Heart right ventricle (tissue), 16 donors: ENCODE measurements at regions of chr1 and their contacts with region 1.

Region 1: DNA sequence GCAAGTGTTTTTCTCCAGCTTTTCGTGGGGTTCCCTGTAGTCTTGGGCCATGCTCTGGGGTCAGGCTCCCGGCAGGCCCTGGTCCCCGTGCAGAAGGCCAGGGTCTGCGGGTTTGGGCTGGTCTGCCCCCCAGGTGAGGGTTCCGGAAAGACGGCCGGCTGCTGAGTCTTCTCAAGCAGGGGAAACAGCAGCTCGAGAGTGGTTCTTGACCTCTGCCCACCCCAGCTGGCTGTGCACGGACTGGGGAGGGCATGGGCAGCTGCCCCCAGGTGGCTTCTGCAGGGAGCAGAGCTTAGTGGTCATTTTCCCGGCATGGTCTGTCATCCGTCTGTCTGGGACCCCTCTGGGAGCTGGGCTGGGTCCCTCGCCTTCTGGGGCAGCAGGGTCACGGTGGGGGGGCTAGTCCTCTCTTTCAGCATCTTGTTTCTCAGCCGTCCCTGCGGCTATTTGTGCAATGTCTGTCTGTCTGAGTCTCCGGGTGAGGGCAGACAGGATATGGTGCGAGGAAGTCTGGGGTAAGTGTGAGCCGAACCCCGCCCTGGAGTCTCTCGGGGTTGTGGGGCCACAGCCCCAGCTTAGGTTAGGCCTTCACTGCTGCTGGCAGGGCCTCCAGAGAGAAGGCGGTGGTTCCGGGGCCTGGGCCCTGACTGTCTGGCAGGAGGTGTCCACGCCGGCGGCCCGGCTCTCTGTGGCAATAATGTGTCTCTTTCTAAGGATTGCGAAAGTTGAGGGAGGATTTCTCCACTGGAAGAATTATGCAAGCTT is 6.1 kb downstream of the SKI start:
- DNase-seq: peak in 1 of 2 donors; percentile 87
- ATAC-seq: peak; percentile 15 to 80 (median 52)
- H3K4me3 ChIP-seq: peak overlapping the region in 9 of 10 donors; percentile 10 to 89 (median 72)
- H3K27ac ChIP-seq: peak overlapping the region; percentile 31 to 90 (median 78)
- H3K4me1 ChIP-seq: peaks cover 53 to 100% (median 100%) of the 10 kb centered on the region in 9 donors
- H3K27me3 ChIP-seq: no peaks in the 10 kb centered on the region
- CTCF ChIP-seq: no peak

Region 2: DNA sequence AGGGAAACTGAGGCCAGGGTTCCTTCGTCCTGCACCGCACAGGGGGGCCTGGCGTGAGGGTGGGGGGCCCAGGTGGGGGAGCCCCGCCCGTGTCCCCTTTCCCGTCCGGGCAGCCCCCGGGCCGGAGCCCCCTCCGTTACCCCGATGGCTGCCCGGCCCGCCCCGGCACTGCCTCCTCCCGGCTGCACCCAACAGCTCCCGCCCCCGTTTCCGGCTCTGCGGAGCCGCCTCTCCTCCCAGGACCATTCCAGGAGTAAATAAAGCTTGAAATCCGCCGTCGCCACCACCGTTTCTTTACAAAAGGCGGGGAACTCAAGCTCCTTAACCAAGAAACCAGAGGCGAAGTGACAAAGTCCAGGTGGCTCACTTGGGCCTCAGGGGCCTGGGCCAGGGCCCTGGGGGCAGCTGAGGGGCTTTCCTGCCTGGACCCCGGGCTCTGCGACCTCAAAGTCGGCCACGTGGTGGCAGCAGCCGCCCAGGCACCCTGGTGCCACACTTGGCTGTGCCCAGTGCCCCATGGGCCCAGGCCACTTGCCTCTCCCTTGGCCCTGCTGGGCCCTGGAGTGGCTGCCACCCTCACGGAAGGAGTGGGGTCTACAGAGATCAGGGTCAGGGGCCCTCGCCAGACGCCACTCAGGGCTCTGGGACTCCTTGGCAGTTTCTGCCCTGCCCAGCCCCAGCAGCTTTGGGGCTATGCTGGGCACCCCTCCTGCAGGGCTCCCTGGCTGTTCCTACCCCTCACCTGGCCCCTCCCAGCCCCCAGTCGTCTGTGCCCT is 39.1 kb before region 1 on chr1:
- intact Hi-C with region 1: loop called in 4 of 10 experiments (anchors 5 kb)
- DNase-seq: peak; percentile 92
- ATAC-seq: peak; percentile 77 to 86 (median 82)
- H3K4me3 ChIP-seq: peak overlapping the region; percentile 47 to 78 (median 70)
- H3K27ac ChIP-seq: peak overlapping the region; percentile 90 to 98 (median 94)
- H3K4me1 ChIP-seq: peaks cover 36 to 71% (median 65%) of the 10 kb centered on the region in 9 donors
- H3K27me3 ChIP-seq: no peaks in the 10 kb centered on the region
- CTCF ChIP-seq: peak; percentile 91 to 98 (median 95)

Region 3: GRCh38 chr1:2267051-2267830 is 33.1 kb after region 1 on chr1:
- intact Hi-C with region 1: loop called in 1 of 10 experiments (anchors 5 kb)
- DNase-seq: peak in 1 of 2 donors; percentile 23
- ATAC-seq: peak in 7 of 8 donors; percentile 16 to 53 (median 21)
- H3K4me3 ChIP-seq: peak overlapping the region in 2 of 10 donors; percentile 0 to 13
- H3K27ac ChIP-seq: peak overlapping the region in 2 of 10 donors; percentile 6 to 10
- H3K4me1 ChIP-seq: peaks cover 47 to 90% (median 74%) of the 10 kb centered on the region in 9 donors
- H3K27me3 ChIP-seq: no peaks in the 10 kb centered on the region
- CTCF ChIP-seq: no peak

Region 4: DNA sequence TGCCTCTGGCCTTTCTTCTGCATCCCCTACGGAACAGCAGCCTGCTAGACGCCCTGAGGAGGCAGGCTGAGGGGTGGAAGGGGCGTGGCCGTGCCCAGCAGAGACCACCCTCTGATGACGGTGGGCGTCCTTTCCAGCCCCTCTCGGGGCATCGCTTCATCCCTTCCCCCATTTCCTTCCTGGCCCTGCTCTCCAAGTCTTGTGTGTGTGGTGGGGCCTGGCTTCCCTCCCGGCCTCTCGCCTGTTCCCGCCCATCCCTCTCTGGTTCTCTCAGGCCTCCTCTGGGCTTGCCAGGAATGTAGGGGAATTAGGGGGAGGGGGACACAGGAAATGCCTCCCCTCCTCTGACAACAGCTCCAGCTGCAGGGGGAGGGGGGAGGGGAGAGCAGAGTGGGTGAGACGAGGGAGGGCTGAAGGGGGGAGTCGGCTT is 45.0 kb after region 1 on chr1:
- intact Hi-C with region 1: loop called in 2 of 10 experiments (anchors 5 kb)
- DNase-seq: peak; percentile 66 to 86
- ATAC-seq: peak; percentile 50 to 83 (median 77)
- H3K4me3 ChIP-seq: peak overlapping the region in 1 of 10 donors; percentile 2
- H3K27ac ChIP-seq: peak overlapping the region in 9 of 10 donors; percentile 10 to 86 (median 78)
- H3K4me1 ChIP-seq: peaks cover 45 to 78% (median 70%) of the 10 kb centered on the region in 9 donors
- H3K27me3 ChIP-seq: no peaks in the 10 kb centered on the region
- CTCF ChIP-seq: no peak

Region 5: GRCh38 chr1:2290595-2291510 is 56.7 kb after region 1 on chr1:
- intact Hi-C with region 1: loop called in 3 of 10 experiments (anchors 5 to 10 kb)
- DNase-seq: peak; percentile 78 to 82
- ATAC-seq: peak; percentile 45 to 85 (median 76)
- H3K4me3 ChIP-seq: peak overlapping the region in 9 of 10 donors; percentile 14 to 44 (median 28)
- H3K27ac ChIP-seq: peak overlapping the region; percentile 56 to 93 (median 77)
- H3K4me1 ChIP-seq: peaks cover 44 to 98% (median 84%) of the 10 kb centered on the region in 9 donors
- H3K27me3 ChIP-seq: no peaks in the 10 kb centered on the region
- CTCF ChIP-seq: no peak

Region 6: DNA sequence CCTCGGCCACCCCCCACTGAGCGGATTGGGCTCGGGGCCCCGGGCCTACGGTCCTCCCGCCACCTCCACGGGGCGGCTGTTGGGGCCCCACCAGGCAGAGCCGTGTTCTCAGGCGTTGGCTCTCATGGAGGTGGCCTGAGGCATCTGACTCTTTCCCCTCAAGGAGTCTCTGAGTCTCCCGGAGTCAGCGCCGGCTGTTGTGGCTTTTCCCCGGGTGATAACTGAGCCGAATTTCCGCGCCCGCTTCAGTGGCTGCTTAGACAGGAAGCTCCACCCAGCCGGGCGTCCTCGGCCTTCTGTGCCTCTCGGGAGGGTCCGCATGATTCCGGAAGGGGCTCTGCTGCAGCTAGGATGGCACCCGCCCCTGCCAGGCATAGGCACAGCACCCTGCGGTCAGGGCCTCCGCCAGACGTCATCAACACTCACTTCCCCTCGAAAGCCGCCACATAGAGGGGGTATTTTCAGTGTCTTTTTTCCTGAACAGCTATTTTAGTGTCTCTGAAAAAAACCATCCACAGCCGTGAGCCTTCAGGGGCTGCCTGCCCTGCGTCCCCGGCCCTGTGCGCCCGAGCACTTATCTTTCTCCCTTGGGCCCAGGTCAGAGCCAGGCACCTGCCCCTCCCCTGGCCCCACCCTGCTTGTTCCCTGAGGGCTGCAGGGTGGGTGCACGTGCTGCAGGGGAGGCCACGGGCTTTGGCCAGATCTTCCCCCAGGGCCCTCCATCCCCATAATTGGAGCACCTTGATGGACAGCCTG is 66.8 kb after region 1 on chr1:
- intact Hi-C with region 1: loop called in 6 of 10 experiments (anchors 2 to 10 kb)
- DNase-seq: peak; percentile 84 to 85
- ATAC-seq: peak; percentile 46 to 76 (median 63)
- H3K4me3 ChIP-seq: peak overlapping the region in 9 of 10 donors; percentile 3 to 49 (median 42)
- H3K27ac ChIP-seq: peak overlapping the region; percentile 28 to 97 (median 88)
- H3K4me1 ChIP-seq: peaks cover 24 to 85% (median 58%) of the 10 kb centered on the region in 9 donors
- H3K27me3 ChIP-seq: no peaks in the 10 kb centered on the region
- CTCF ChIP-seq: no peak

Region 7: GRCh38 chr1:2314803-2315673 is 80.9 kb after region 1 on chr1:
- intact Hi-C with region 1: loop called in 6 of 10 experiments (anchors 2 to 5 kb)
- DNase-seq: peak; percentile 74
- ATAC-seq: peak; percentile 9 to 61 (median 34)
- H3K4me3 ChIP-seq: peak overlapping the region; percentile 45 to 80 (median 68)
- H3K27ac ChIP-seq: peak overlapping the region; percentile 82 to 96 (median 91)
- H3K4me1 ChIP-seq: peaks cover 40 to 100% (median 68%) of the 10 kb centered on the region in 9 donors
- H3K27me3 ChIP-seq: peaks cover 0 to 20% (median 0%) of the 10 kb centered on the region in 7 donors
- CTCF ChIP-seq: peak; percentile 92 to 99 (median 97)